Breast epithelium (tissue), 4 donors: ENCODE measurements at regions of chr3 and their contacts with region 1.

Region 1: GRCh38 chr3:8077126-8077525 is 424.5 kb upstream of the LMCD1 start:
- DNase-seq: no peak
- H3K4me3 ChIP-seq: no peak overlapping the region
- H3K27ac ChIP-seq: no peak overlapping the region
- H3K4me1 ChIP-seq: no peaks in the 10 kb centered on the region
- H3K27me3 ChIP-seq: no peaks in the 10 kb centered on the region
- CTCF ChIP-seq: no peak
- POLR2A ChIP-seq: no peak

Region 2: GRCh38 chr3:7707187-7707586 is 369.9 kb before region 1 on chr3:
- intact Hi-C with region 1: loop called (anchors 5 kb)
- DNase-seq: no peak
- H3K4me3 ChIP-seq: no peak overlapping the region
- H3K27ac ChIP-seq: no peak overlapping the region
- H3K4me1 ChIP-seq: no peaks in the 10 kb centered on the region
- H3K27me3 ChIP-seq: no peaks in the 10 kb centered on the region
- CTCF ChIP-seq: no peak
- POLR2A ChIP-seq: no peak

Region 3: GRCh38 chr3:9792405-9793160 is 1715.5 kb after region 1 on chr3 and contains the starts of genes ARPC4 and TADA3:
- intact Hi-C with region 1: no loop called
- DNase-seq: peak; percentile 87 to 88
- H3K4me3 ChIP-seq: peak within 1 kb of the TSS; percentile 91 to 100 (median 100)
- H3K27ac ChIP-seq: peak within 1 kb of the TSS; percentile 99
- H3K4me1 ChIP-seq: peaks cover 0 to 11% of the 10 kb centered on the region in 2 donors
- H3K27me3 ChIP-seq: no peaks in the 10 kb centered on the region
- CTCF ChIP-seq: peak in 2 of 3 donors; percentile 28 to 40
- POLR2A ChIP-seq: peak; percentile 67
- total RNA-seq, gene ARPC4: 116 to 163 (median 117) TPM
- total RNA-seq, gene TADA3: 66.1 to 73.4 (median 70.1) TPM